PC-3 (cell line): ENCODE measurements at regions of chr19 and their contacts with region 1.

Region 1: GRCh38 chr19:52237771-52238400 is 31.5 kb upstream of the ZNF766 start:
- DNase-seq: peak; percentile 84
- ATAC-seq: peak; percentile 84
- H3K4me3 ChIP-seq: no peak overlapping the region
- H3K27ac ChIP-seq: no peak overlapping the region
- H3K4me1 ChIP-seq: no peaks in the 10 kb centered on the region
- H3K27me3 ChIP-seq: no peaks in the 10 kb centered on the region
- CTCF ChIP-seq: peak; percentile 96

Region 2: DNA sequence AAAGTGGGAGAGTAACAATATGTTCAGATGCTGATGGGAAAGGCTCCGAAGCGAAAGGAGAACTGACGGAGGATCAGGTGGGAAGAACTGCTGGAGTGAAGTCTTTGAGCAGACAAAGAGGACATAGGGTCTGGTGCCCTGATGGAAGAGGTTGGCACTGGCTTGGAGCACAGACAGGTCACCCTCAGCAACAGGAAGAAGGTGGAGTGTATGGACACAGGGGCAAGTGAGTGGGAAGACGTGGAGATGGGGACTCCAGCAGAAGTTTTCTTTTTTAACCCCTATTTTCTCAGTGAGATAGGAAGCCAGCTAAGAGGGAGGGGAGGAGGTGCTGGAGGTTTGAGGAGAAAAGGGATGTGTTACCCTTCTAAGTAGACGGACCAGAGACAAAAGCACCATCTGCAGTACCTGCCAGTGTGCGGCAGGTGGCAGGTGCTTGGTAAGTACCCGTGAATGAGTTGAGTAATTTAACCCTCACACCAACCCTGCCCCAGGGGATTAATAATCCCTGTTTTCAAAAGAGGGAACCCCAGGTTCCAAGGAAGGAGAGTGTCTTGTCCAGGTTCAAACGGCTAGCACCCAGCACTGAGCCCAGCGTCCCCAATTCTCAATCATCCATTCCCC is 525.3 kb before region 1 on chr19:
- CTCF ChIA-PET with region 1: no interaction called
- POLR2A ChIA-PET with region 1: no interaction called
- intact Hi-C with region 1: loop called (anchors 5 kb)
- DNase-seq: peak; percentile 85
- ATAC-seq: peak; percentile 76
- H3K4me3 ChIP-seq: no peak overlapping the region
- H3K27ac ChIP-seq: no peak overlapping the region
- H3K4me1 ChIP-seq: no peaks in the 10 kb centered on the region
- H3K27me3 ChIP-seq: peaks cover 3% of the 10 kb centered on the region; the same call in 1 of the 2 replicates
- CTCF ChIP-seq: peak; percentile 90

Region 3: DNA sequence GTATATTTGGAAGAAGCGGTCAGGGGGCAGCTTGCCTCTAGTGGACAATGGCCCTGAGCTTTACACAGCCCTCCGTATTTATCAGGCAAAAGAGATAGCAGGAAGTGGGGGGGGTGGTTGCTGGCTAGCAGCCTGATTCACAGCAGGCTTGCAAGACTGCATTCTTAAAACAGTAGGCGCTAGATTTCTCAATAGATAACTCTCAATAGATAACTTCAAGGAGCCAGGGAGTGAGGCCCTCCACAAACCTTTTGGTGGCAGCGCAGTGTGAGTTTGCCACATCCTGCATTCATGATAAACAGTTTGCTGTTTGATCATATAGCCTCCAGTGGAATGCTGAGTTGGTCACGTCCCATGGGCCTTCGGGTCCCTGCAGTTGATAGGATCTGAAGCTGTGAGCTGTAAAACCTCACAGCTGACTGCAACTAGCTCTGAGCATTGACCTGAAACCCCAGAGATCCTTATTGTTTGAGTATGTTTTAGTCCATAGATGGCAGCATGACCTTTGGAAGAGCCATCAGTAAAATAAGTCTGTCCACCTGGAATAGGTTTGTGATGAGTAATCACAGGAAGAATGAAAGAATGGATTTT is 430.7 kb before region 1 on chr19:
- CTCF ChIA-PET with region 1: no interaction called
- POLR2A ChIA-PET with region 1: interaction called, 3 read pairs
- intact Hi-C with region 1: loop called (anchors 1 kb)
- DNase-seq: peak; percentile 89
- ATAC-seq: peak; percentile 64
- H3K4me3 ChIP-seq: no peak overlapping the region
- H3K27ac ChIP-seq: peak overlapping the region; percentile 75
- H3K4me1 ChIP-seq: peaks cover 53% of the 10 kb centered on the region
- H3K27me3 ChIP-seq: no peaks in the 10 kb centered on the region
- CTCF ChIP-seq: peak; percentile 46

Region 4: GRCh38 chr19:52095172-52096014 is 142.5 kb before region 1 on chr19 and contains the start of gene ZNF841:
- CTCF ChIA-PET with region 1: interaction called, 3 read pairs
- POLR2A ChIA-PET with region 1: no interaction called
- intact Hi-C with region 1: loop called (anchors 2 kb)
- DNase-seq: peak; percentile 92
- ATAC-seq: peak; percentile 96
- H3K4me3 ChIP-seq: peak within 1 kb of the TSS; percentile 98
- H3K27ac ChIP-seq: peak within 1 kb of the TSS; percentile 62
- H3K4me1 ChIP-seq: no peaks in the 10 kb centered on the region
- H3K27me3 ChIP-seq: no peaks in the 10 kb centered on the region
- CTCF ChIP-seq: 0 out of 2 replicates have a peak, but pooled peaks have one; percentile 10
- total RNA-seq, gene ZNF841: 11.6 and 15.0 TPM in 2 replicates

Region 5: DNA sequence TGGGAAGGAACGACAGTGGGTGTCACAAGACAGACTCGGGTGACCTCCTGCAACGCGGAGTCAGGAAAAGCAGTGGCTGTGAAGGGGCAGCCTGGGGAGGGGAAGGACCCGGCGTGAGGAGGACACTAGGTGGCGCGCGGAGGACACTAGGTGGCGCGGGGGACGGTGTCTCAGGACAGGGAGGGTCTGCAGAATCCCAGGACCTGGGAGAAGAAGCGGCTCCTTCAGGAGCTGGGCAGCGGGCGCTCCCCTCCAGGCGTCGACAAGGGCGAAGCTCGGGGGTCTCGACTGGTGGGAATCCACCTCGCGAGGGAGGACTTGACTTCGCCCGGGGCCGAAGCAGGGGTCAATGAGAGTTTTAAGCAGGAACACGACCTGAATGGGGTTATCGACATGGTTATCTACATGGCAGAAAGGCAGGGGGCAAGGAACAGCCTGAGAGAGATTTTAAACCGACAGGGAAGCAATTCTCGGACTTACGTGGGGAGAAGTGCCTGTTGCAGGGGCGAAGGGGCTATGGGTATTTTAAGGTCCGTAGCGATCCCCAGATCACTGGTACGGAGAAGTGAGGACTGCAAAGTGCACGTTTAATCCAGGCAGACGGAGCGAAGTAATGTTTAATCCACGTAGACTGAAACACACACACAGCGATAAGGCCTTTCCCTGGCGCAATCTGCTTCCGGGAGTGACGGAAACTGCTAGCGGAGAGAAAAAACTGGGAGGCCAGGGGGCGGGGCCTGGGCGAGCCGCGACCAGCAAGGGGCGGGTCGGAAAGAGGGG is 98.4 kb before region 1 on chr19 and contains the start of gene ZNF616:
- CTCF ChIA-PET with region 1: no interaction called
- POLR2A ChIA-PET with region 1: no interaction called
- intact Hi-C with region 1: loop called (anchors 1 kb)
- DNase-seq: peak; percentile 96
- ATAC-seq: peak; percentile 92
- H3K4me3 ChIP-seq: peak within 1 kb of the TSS; percentile 91
- H3K27ac ChIP-seq: peak within 1 kb of the TSS; percentile 81
- H3K4me1 ChIP-seq: peaks cover 7% of the 10 kb centered on the region; the same call in 1 of the 2 replicates
- H3K27me3 ChIP-seq: no peaks in the 10 kb centered on the region
- CTCF ChIP-seq: peak; percentile 90
- total RNA-seq, gene ZNF616: 3.7 and 3.9 TPM in 2 replicates

Region 6: GRCh38 chr19:52189735-52190486 is 48.0 kb before region 1 on chr19 and contains the start of gene PPP2R1A:
- CTCF ChIA-PET with region 1: interaction called, 5 read pairs
- POLR2A ChIA-PET with region 1: no interaction called
- intact Hi-C with region 1: loop called (anchors 5 kb)
- DNase-seq: peak; percentile 100
- ATAC-seq: peak; percentile 91
- H3K4me3 ChIP-seq: peak within 1 kb of the TSS; percentile 86
- H3K27ac ChIP-seq: peak within 1 kb of the TSS; percentile 86
- H3K4me1 ChIP-seq: peaks cover 18% of the 10 kb centered on the region
- H3K27me3 ChIP-seq: no peaks in the 10 kb centered on the region
- CTCF ChIP-seq: no peak
- total RNA-seq, gene PPP2R1A: 336 and 427 TPM in 2 replicates

Region 7: GRCh38 chr19:52622261-52622660 is 384.4 kb after region 1 on chr19:
- CTCF ChIA-PET with region 1: no interaction called
- POLR2A ChIA-PET with region 1: no interaction called
- intact Hi-C with region 1: no loop called
- DNase-seq: no peak
- ATAC-seq: no peak
- H3K4me3 ChIP-seq: no peak overlapping the region
- H3K27ac ChIP-seq: no peak overlapping the region
- H3K4me1 ChIP-seq: no peaks in the 10 kb centered on the region
- H3K27me3 ChIP-seq: no peaks in the 10 kb centered on the region
- CTCF ChIP-seq: peak; percentile 24; the same call in 1 of the 2 replicates